CD8-positive, alpha-beta memory T cell (primary cell): ENCODE measurements at regions of chr11 and their contacts with region 1.

Region 1: DNA sequence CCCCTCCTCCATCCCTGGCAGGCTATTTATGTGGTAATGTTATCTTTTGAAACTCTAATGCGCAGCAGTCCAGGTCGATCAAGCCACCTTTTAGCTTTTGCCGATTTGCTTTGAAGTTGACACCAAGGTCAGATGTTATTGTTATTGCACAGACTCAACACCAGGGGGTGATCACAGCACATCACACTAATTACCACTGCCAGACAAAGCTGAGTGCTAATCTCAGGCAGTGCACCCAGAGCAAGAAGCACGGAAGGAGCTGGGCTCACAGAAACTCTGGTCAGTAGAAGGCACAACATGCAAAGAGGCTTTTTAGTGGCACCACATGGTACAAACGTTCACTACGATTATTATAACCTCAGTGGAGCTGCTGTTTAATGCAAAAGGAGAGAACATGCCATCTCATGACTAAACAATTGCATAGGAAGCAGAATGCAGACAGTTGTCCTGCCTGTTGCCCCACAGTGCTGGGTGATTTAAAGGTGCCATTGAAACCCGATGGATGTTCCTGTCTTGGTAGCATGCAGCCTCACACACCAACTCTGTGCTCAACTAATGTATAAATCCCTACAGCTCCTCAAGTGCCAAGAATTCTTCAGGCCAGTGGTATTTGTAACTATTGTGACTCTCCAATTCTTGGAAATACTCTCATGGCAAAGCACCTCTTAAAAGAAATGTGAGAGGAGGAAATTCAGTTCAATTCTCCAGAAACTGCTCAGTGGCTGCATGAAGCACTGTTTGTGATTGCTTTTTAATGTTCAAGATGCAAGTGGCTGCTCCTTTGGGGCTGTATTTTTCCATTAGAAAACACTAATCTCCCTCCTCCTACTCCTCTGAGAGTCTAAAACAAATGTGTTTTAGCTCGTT is 353.9 kb upstream of the DDI1 start:
- DNase-seq: peak; percentile 12 to 58 (median 41)
- H3K4me3 ChIP-seq: no peak overlapping the region
- H3K4me3 Mint-ChIP-seq: peak overlapping the region in 3 of 7 donors; percentile 0 to 19 (median 1)
- H3K27ac ChIP-seq: no peak overlapping the region
- H3K27ac Mint-ChIP-seq: peak overlapping the region in 1 of 8 donors; percentile 2
- H3K4me1 ChIP-seq: no peaks in the 10 kb centered on the region
- H3K4me1 Mint-ChIP-seq: peaks cover 5 to 11% (median 6%) of the 10 kb centered on the region in 3 donors
- H3K27me3 ChIP-seq: no peaks in the 10 kb centered on the region
- H3K27me3 Mint-ChIP-seq: peaks cover 1 to 4% of the 10 kb centered on the region in 2 donors

Region 2: DNA sequence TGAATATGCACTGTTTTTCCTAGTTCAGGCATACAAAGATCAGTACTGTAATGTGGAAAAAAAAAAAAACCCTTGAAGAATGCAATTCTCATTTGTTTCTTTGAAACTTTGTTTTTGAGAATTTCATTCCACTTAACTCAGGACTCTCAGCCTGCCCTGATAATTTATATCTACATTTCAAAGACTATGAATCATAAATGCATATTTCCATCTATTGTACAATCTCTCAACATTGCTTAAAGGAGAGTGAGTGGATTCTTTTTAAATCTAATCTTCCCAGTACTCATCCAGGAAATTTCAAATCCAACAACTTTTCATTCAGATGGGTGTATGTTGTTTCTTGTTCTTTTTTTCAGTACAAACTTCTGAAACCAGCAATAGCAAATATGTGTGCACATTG is 31.7 kb after region 1 on chr11:
- CTCF ChIA-PET with region 1: no interaction called
- POLR2A ChIA-PET with region 1: no interaction called
- DNase-seq: no peak
- H3K4me3 ChIP-seq: no peak overlapping the region
- H3K4me3 Mint-ChIP-seq: no peak overlapping the region
- H3K27ac ChIP-seq: no peak overlapping the region
- H3K27ac Mint-ChIP-seq: no peak overlapping the region
- H3K4me1 ChIP-seq: no peaks in the 10 kb centered on the region
- H3K4me1 Mint-ChIP-seq: peaks cover 0 to 8% (median 0%) of the 10 kb centered on the region in 3 donors
- H3K27me3 ChIP-seq: no peaks in the 10 kb centered on the region
- H3K27me3 Mint-ChIP-seq: peaks cover 0 to 6% of the 10 kb centered on the region in 2 donors

Region 3: GRCh38 chr11:103806130-103806900 is 123.8 kb after region 1 on chr11:
- CTCF ChIA-PET with region 1: no interaction called
- POLR2A ChIA-PET with region 1: no interaction called
- DNase-seq: no peak
- H3K4me3 ChIP-seq: no peak overlapping the region
- H3K4me3 Mint-ChIP-seq: no peak overlapping the region
- H3K27ac ChIP-seq: no peak overlapping the region
- H3K27ac Mint-ChIP-seq: no peak overlapping the region
- H3K4me1 ChIP-seq: no peaks in the 10 kb centered on the region
- H3K4me1 Mint-ChIP-seq: no peaks in the 10 kb centered on the region
- H3K27me3 ChIP-seq: no peaks in the 10 kb centered on the region
- H3K27me3 Mint-ChIP-seq: peaks cover 0 to 2% of the 10 kb centered on the region in 2 donors

Region 4: DNA sequence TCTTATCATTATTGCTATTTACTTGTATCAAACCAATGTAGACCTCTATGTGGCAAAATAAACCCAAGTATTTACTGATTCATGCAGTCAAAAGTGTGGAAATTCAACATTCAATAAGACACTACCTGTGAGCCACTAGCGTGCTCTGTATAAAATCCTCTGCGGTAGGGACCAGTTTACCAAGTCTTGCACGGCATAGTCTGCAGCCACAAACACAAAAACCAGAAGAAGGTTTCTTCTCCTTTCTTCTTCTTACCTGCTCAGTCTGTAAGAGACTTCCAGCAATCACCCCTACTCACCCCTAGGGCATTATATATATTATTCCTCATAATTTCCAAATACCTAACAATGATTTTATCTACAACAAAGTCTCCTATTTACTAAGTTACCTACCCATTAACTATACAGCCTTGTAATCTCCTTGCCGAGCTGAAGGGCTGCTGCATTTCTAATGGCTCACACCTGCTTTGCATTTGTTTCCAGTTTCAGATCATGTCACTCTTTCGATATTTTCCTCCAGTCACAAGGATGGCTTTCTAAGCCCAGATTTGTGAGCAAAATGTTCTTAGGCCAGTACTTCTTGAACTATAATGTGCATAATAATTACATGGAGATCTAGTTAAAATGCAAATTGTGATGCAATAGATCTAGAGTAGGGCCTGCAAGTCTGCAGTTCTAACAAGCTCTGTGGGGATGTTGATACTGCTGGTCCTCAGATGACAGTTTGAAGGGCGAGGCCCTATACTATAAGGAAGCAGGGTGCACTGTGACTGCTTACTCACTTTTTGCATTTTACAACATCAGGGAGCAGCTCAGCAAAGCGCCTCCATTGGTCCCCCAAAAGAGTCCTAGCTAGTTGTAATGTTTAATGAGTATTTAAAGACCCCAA is 162.0 kb after region 1 on chr11:
- CTCF ChIA-PET with region 1: no interaction called
- POLR2A ChIA-PET with region 1: no interaction called
- DNase-seq: no peak
- H3K4me3 ChIP-seq: no peak overlapping the region
- H3K4me3 Mint-ChIP-seq: no peak overlapping the region
- H3K27ac ChIP-seq: no peak overlapping the region
- H3K27ac Mint-ChIP-seq: no peak overlapping the region
- H3K4me1 ChIP-seq: no peaks in the 10 kb centered on the region
- H3K4me1 Mint-ChIP-seq: no peaks in the 10 kb centered on the region
- H3K27me3 ChIP-seq: no peaks in the 10 kb centered on the region
- H3K27me3 Mint-ChIP-seq: no peaks in the 10 kb centered on the region

Region 5: GRCh38 chr11:104164028-104164520 is 481.5 kb after region 1 on chr11 and contains the start of gene PDGFD:
- CTCF ChIA-PET with region 1: interaction called, 14 read pairs
- POLR2A ChIA-PET with region 1: no interaction called
- DNase-seq: peak in 4 of 5 donors; percentile 31 to 62 (median 50)
- H3K4me3 ChIP-seq: peak within 1 kb of the TSS; percentile 39
- H3K4me3 Mint-ChIP-seq: peak within 1 kb of the TSS; percentile 86 to 97 (median 90)
- H3K27ac ChIP-seq: no peak within 1 kb of the TSS
- H3K27ac Mint-ChIP-seq: peak within 1 kb of the TSS in 6 of 8 donors; percentile 29 to 88 (median 64)
- H3K4me1 ChIP-seq: no peaks in the 10 kb centered on the region
- H3K4me1 Mint-ChIP-seq: peaks cover 11 to 24% (median 12%) of the 10 kb centered on the region in 3 donors
- H3K27me3 ChIP-seq: no peaks in the 10 kb centered on the region
- H3K27me3 Mint-ChIP-seq: peaks cover 3 to 32% of the 10 kb centered on the region in 2 donors
- total RNA-seq, gene PDGFD: 0.15 to 0.29 TPM